ENCODE measurements at regions of chr2 and their contacts with region 1.

Region 1: GRCh38 chr2:162318328-162319180 is at the start of gene IFIH1:
- DNase-seq: peak; percentile 48 to 75
- ATAC-seq: peak; percentile 91 to 99
- H3K4me3 ChIP-seq: peak within 1 kb of the TSS; percentile 62 to 73 (median 70)
- H3K27ac ChIP-seq: peak within 1 kb of the TSS; percentile 66 to 80 (median 76)
- H3K4me1 ChIP-seq: no peaks in the 10 kb centered on the region
- H3K27me3 ChIP-seq: no peaks in the 10 kb centered on the region
- CTCF ChIP-seq: peak in 2 of 5 experiments; percentile 10 to 35
- POLR2A ChIP-seq: peak; percentile 8 to 51
- total RNA-seq, gene IFIH1: 0.97 to 5.4 (median 1.7) TPM

Region 2: DNA sequence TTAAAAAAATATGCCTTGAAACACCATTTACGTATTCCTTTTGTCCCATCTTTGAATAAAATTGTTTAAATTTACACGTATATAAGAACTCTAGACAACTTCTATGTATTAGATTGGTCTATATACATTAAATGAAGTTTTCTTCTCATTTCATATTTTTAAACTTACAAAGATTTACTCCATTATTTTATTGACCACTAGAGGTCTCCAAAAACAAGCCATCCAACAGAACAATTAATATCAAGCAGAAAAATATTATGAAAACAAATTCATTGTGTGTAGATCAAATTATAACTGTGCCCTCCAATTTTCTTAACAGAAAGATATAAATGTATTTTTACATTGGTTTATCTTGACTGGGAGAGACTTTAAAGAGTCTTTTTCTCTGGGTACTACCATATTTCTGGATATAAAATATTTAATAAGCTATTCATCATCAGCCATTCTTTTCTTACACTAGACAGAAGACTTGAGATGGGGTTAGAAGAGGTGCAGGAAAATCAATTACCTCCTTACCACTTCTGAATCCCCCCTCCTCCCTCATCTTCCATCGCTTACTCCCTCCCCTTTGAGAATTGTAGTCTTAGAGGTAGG is 311.0 kb before region 1 on chr2:
- in situ Hi-C with region 1: loop called in 1 of 4 experiments (anchors 25 kb)
- intact Hi-C with region 1: no loop called
- DNase-seq: no peak
- ATAC-seq: no peak
- H3K4me3 ChIP-seq: no peak overlapping the region
- H3K27ac ChIP-seq: no peak overlapping the region
- H3K4me1 ChIP-seq: no peaks in the 10 kb centered on the region
- H3K27me3 ChIP-seq: no peaks in the 10 kb centered on the region
- CTCF ChIP-seq: peak in 4 of 5 experiments; percentile 14 to 66 (median 56)
- POLR2A ChIP-seq: no peak

Region 3: GRCh38 chr2:162343824-162344616 is 25.5 kb after region 1 on chr2 and contains the start of gene GCA:
- in situ Hi-C with region 1: no loop called
- intact Hi-C with region 1: no loop called
- DNase-seq: peak; percentile 89 to 93
- ATAC-seq: peak; percentile 98
- H3K4me3 ChIP-seq: peak within 1 kb of the TSS; percentile 60 to 86 (median 74)
- H3K27ac ChIP-seq: peak within 1 kb of the TSS; percentile 16 to 66 (median 62)
- H3K4me1 ChIP-seq: peaks cover 0 to 8% of the 10 kb centered on the region in 2 donors
- H3K27me3 ChIP-seq: no peaks in the 10 kb centered on the region
- CTCF ChIP-seq: no peak
- POLR2A ChIP-seq: peak; percentile 12 to 44
- total RNA-seq, gene GCA: 3.7 to 12.0 (median 6.2) TPM

Measured in gastrocnemius medialis (tissue), 4 donors.